ENCODE measurements at regions of chr11 and their contacts with region 1.

Region 1: GRCh38 chr11:5808500-5809121 is at the start of gene OR52N2:
- DNase-seq: peak; percentile 38 to 76 (median 70)
- H3K4me3 ChIP-seq: no peak within 1 kb of the TSS
- H3K27ac ChIP-seq: no peak within 1 kb of the TSS
- H3K4me1 ChIP-seq: no peaks in the 10 kb centered on the region
- H3K27me3 ChIP-seq: no peaks in the 10 kb centered on the region
- CTCF ChIP-seq: peak; percentile 54 to 81 (median 69)
- EP300 ChIP-seq: no peak
- POLR2A ChIP-seq: no peak
- total RNA-seq, gene OR52N2: not detected

Region 2: GRCh38 chr11:5204787-5205186 is 603.8 kb before region 1 on chr11:
- intact Hi-C with region 1: loop called in 1 of 4 experiments (anchors 10 kb)
- DNase-seq: no peak
- H3K4me3 ChIP-seq: no peak overlapping the region
- H3K27ac ChIP-seq: no peak overlapping the region
- H3K4me1 ChIP-seq: no peaks in the 10 kb centered on the region
- H3K27me3 ChIP-seq: no peaks in the 10 kb centered on the region
- CTCF ChIP-seq: no peak
- EP300 ChIP-seq: no peak
- POLR2A ChIP-seq: no peak

Region 3: DNA sequence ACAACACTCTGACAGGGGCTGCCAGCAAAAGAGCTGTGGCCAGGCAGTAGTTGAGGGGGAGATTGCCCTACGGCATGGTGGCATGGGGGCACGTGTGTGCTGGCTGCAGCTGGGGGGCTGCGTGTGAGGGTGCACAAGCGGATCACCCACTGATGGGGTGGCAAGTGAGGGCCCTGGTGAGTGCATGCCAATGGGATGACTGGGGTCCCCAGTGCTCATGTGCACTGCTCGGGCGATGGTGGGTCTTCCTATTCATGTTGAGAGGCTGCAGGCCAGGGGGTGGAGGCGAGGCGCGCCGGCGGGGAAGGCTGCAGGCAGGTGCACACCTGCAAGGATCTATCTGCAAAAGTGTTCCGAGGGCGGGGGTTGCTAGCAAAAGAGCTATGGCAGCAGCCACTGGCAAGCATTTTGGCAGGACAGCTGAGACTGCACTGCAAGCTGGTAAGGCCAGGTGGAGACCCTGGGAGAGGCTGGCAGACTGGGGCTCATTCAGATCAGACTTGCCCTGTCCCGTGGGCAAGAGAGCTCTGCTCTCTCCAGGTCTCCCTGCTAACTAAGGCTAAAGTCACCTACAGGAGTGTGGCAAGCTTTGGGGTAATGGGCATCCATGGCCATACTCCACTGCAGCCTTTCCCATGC is 347.5 kb before region 1 on chr11:
- intact Hi-C with region 1: loop called in 1 of 4 experiments (anchors 10 kb)
- DNase-seq: no peak
- H3K4me3 ChIP-seq: no peak overlapping the region
- H3K27ac ChIP-seq: no peak overlapping the region
- H3K4me1 ChIP-seq: no peaks in the 10 kb centered on the region
- H3K27me3 ChIP-seq: no peaks in the 10 kb centered on the region
- CTCF ChIP-seq: no peak
- EP300 ChIP-seq: no peak
- POLR2A ChIP-seq: no peak

Measured in ovary (tissue), 10 donors.